Activated T-helper 1 cell treated with anti-CD3 and anti-CD28 coated beads, Interleukin-12 subunit alpha, Interleukin-12 subunit beta, Interleukin-2, Interleukin-4 antibody, amounts not matched to agents 30 ng/mL and 10 ng/mL and 1 ng/mL, durations not matched to agents 14 hours and 24 hours and 36 hours (primary cell): ENCODE measurements at regions of chr6 and their contacts with region 1.

Region 1: GRCh38 chr6:90194371-90194841 is 102.2 kb downstream of the BACH2 start:
- DNase-seq: no peak
- H3K4me3 Mint-ChIP-seq: peak overlapping the region; percentile 38
- H3K27ac Mint-ChIP-seq: peak overlapping the region; percentile 54
- H3K4me1 Mint-ChIP-seq: peaks cover 68% of the 10 kb centered on the region
- H3K27me3 Mint-ChIP-seq: peaks cover 2% of the 10 kb centered on the region

Region 2: DNA sequence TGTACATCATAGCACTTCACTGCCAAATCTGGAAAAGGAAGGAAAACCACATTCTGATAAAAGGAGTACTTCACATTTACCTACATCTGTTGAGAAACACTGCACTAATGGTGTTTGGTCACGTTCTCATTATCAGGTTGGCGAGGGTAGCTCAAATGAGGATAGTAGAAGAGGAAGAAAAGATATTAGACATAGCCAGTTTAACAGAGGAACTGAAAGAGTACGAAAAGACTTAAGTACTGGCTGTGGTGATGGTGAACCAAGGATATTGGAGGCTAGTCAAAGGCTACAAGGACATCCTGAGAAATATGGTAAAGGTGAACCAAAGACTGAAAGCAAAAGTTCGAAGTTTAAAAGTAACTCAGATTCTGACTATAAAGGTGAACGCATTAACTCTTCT is 332.1 kb before region 1 on chr6:
- intact Hi-C with region 1: no loop called
- DNase-seq: no peak
- H3K4me3 Mint-ChIP-seq: no peak overlapping the region
- H3K27ac Mint-ChIP-seq: no peak overlapping the region
- H3K4me1 Mint-ChIP-seq: peaks cover 31% of the 10 kb centered on the region
- H3K27me3 Mint-ChIP-seq: no peaks in the 10 kb centered on the region

Region 3: GRCh38 chr6:89966228-89966544 is 228.2 kb before region 1 on chr6:
- intact Hi-C with region 1: loop called (anchors 5 kb)
- DNase-seq: no peak
- H3K4me3 Mint-ChIP-seq: no peak overlapping the region
- H3K27ac Mint-ChIP-seq: peak overlapping the region; percentile 92
- H3K4me1 Mint-ChIP-seq: peaks cover 59% of the 10 kb centered on the region
- H3K27me3 Mint-ChIP-seq: peaks cover 3% of the 10 kb centered on the region

Region 4: DNA sequence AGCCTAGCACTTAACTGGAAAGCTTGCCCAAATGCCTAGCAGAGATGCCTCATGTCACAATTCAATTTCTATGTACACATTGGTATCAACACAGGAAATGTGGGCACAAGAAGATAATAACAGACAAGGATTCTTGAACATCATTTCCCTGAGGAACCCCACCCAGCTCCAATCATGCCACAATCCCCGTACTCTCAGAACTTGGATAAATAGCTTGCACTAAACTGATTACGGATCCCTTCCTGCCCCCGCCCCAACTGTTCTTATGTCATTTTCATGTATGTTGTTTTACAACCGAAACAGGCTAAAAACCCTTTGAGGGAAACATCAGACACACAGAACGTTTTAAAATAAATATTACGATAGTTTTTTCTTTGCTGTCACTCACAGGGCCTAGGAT is 15.1 kb after region 1 on chr6:
- intact Hi-C with region 1: no loop called
- DNase-seq: no peak
- H3K4me3 Mint-ChIP-seq: no peak overlapping the region
- H3K27ac Mint-ChIP-seq: peak overlapping the region; percentile 23
- H3K4me1 Mint-ChIP-seq: peaks cover 56% of the 10 kb centered on the region
- H3K27me3 Mint-ChIP-seq: peaks cover 2% of the 10 kb centered on the region

Region 5: GRCh38 chr6:90241229-90241880 is 46.9 kb after region 1 on chr6:
- intact Hi-C with region 1: loop called (anchors 1 kb)
- DNase-seq: no peak
- H3K4me3 Mint-ChIP-seq: no peak overlapping the region
- H3K27ac Mint-ChIP-seq: no peak overlapping the region
- H3K4me1 Mint-ChIP-seq: peaks cover 63% of the 10 kb centered on the region
- H3K27me3 Mint-ChIP-seq: no peaks in the 10 kb centered on the region